Posterior vena cava (tissue), 2 donors: ENCODE measurements at regions of chr17 and their contacts with region 1.

Region 1: DNA sequence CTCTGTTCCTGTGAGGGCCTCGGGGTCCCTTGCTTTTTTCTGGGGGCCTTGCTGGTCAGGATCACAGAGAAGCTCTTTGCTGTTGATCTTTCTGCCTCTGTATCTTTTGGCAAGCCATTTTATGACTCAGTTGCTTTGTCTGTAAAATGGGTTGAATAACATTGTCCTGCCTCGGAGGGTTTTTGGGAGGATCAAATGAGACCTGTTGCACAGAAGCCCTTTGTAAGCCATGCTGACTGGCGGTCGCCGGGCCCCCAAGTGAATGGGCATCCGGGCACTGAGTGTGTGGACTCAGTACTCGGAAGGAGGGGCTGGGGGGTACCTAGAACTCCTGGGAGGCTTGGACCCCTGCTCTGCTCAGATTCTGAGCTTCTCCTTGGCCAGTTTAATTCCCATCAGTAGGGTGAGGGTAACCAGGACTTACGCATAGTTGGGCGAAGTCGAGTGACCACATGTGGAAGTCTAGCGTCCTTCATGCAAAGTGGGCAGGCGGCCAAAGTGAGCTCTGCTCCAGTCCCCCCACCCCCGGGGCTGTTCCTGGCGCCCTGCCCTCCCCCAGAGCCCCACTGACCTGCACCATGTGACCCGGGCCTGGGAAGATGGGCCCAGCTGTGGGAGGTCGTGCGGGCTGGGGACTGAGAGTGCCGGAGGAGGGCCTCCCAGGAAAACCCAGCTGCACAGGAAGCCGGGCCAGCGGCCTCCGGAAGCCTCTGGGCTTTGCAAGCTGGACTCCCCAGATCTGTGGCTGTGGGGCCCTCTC is 284.0 kb downstream of the SEC14L1 start:
- DNase-seq: peak; percentile 95

Region 2: GRCh38 chr17:77388384-77389311 is 36.1 kb before region 1 on chr17:
- intact Hi-C with region 1: loop called in 1 of 2 experiments (anchors 2 kb)
- DNase-seq: no peak